ENCODE measurements at regions of chr1 and their contacts with region 1.

Region 1: DNA sequence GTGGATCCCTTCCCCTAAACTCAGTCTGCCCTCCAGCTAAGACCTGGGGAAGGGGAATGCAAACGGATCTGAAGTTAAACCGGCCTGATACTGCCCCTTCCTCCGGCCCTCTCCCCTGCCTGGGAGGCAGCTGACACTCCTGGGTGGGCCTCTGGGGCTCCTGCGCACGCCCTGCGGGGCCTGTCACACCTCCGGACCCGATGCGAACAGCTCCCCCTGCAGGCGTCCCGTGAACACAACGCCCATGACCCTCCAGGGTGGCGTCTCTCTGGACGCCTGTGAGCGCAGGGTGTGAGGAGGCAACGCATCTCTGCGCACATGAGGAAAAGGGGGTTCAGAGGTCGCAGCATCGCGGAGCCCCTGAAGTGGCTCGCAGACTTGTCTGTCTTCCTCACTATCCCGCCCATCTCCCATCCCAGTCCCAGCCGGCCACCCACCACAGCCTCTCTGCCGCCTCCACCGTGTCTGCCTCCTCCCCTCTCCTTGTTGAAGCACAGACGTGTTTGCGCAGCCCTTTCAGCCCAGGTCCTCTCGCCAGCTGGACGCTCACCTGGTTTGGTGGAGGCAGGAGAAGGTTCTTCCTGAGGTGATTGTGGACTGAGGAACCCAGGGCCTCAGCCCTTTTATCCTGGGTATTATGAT is 421 bp upstream of the LCE3A start:
- DNase-seq: peak; percentile 22
- H3K4me3 Mint-ChIP-seq: no peak overlapping the region
- H3K27ac Mint-ChIP-seq: no peak overlapping the region
- H3K4me1 Mint-ChIP-seq: peaks cover 1% of the 10 kb centered on the region
- H3K27me3 Mint-ChIP-seq: peaks cover 23% of the 10 kb centered on the region

Region 2: GRCh38 chr1:152479792-152480595 is 143.3 kb before region 1 on chr1:
- CTCF ChIA-PET with region 1: no interaction called
- intact Hi-C with region 1: loop called (anchors 10 kb)
- DNase-seq: peak; percentile 74
- H3K4me3 Mint-ChIP-seq: no peak overlapping the region
- H3K27ac Mint-ChIP-seq: no peak overlapping the region
- H3K4me1 Mint-ChIP-seq: peaks cover 6% of the 10 kb centered on the region
- H3K27me3 Mint-ChIP-seq: no peaks in the 10 kb centered on the region

Region 3: DNA sequence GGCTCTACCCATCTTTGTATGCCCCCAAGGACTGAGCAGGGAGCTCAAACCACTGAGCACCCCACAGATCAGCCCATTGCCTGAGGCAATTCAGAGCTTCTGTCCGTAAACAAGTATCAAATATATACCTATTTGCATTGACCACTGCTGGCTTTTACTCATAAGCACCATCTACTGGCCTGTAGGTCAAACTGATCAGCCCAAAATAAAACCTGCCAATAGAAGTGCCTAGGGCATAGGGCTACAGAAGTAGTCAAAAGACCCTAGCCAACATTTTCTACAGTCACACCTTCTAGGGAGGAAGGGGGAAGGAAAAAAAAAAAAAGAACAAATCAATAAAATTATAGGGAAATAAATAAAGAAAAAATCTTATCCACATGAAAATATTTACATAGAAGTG is 37.7 kb before region 1 on chr1:
- CTCF ChIA-PET with region 1: no interaction called
- intact Hi-C with region 1: no loop called
- DNase-seq: no peak
- H3K4me3 Mint-ChIP-seq: no peak overlapping the region
- H3K27ac Mint-ChIP-seq: no peak overlapping the region
- H3K4me1 Mint-ChIP-seq: no peaks in the 10 kb centered on the region
- H3K27me3 Mint-ChIP-seq: peaks cover 3% of the 10 kb centered on the region

Measured in activated naive CD4-positive, alpha-beta T cell treated with anti-CD3 and anti-CD28 coated beads for 36 hours (primary cell).